Activated naive CD4-positive, alpha-beta T cell treated with anti-CD3 and anti-CD28 coated beads, Interleukin-2, amount 10 ng/mL, durations not matched to agents 7 days and 5 days (primary cell): ENCODE measurements at regions of chr3 and their contacts with region 1.

Region 1: DNA sequence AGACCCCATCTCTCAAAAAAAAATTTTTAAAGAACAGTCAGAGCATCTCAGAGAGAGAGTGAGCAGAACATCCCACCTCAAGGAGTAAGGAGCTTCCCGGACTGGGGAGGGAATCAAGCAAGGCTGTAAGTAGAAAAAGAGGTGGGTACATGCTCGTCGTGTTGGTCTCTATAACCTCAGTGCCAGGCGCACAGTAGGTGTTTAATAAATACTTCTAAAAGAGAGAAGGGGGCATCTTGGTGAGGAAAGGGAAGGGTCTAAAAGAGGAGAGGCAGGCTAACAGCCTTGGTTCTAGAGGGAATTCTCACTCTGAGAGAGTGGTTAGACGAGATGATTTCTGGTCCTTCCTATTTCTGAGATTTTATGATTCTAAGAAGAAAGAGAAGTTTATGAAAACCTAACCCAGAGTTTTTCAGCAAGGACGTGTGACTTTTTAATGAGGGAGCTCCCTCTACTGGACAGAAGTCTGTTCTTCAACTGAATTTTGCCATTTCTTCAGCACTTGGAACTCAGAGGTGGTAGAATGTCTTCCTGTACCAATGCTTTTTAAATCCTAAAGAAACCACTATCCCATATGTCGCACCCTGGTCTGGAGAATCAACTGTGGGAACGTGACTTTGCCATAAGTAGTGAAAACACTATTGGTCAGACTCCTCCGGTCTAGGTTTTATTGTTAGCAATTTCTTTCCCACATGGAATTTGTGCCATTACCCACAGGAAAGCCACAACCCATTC is 199.7 kb upstream of the LMCD1 start:
- DNase-seq: no peak
- H3K4me3 Mint-ChIP-seq: no peak overlapping the region
- H3K27ac Mint-ChIP-seq: no peak overlapping the region
- H3K4me1 Mint-ChIP-seq: peaks cover 4% of the 10 kb centered on the region
- H3K27me3 Mint-ChIP-seq: no peaks in the 10 kb centered on the region

Region 2: GRCh38 chr3:8290611-8291010 is 11.3 kb before region 1 on chr3:
- CTCF ChIA-PET with region 1: interaction called, 10 read pairs
- DNase-seq: no peak
- H3K4me3 Mint-ChIP-seq: no peak overlapping the region
- H3K27ac Mint-ChIP-seq: no peak overlapping the region
- H3K4me1 Mint-ChIP-seq: no peaks in the 10 kb centered on the region
- H3K27me3 Mint-ChIP-seq: peaks cover 4% of the 10 kb centered on the region

Region 3: DNA sequence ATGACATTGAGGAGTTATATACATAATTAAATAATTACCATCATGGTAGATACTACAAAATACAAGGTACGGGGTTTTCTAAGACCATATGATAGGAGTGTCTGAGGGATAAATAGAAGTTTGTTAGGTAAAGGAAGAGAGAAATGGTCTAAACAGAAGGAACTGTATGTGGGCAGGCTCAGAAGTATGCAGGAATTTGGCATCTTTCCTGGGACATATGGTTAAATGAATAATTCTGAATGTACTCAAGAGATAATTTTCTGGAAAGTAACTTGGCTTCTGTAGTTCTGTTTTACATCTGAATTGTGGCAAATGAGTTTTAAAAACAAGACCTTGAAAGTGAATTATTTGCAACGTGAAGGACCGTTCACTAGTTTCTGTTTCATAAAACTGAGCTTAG is 217.3 kb after region 1 on chr3:
- CTCF ChIA-PET with region 1: no interaction called
- DNase-seq: no peak
- H3K4me3 Mint-ChIP-seq: no peak overlapping the region
- H3K27ac Mint-ChIP-seq: no peak overlapping the region
- H3K4me1 Mint-ChIP-seq: no peaks in the 10 kb centered on the region
- H3K27me3 Mint-ChIP-seq: peaks cover 9% of the 10 kb centered on the region